Activated naive CD4-positive, alpha-beta T cell treated with anti-CD3 and anti-CD28 coated beads, Interleukin-2, amount 10 ng/mL, durations not matched to agents 7 days and 5 days (primary cell): ENCODE measurements at regions of chr11 and their contacts with region 1.

Region 1: GRCh38 chr11:3807909-3808860 is at the start of gene PGAP2:
- DNase-seq: peak; percentile 81
- H3K4me3 Mint-ChIP-seq: peak within 1 kb of the TSS; percentile 93
- H3K27ac Mint-ChIP-seq: peak within 1 kb of the TSS; percentile 91
- H3K4me1 Mint-ChIP-seq: peaks cover 26% of the 10 kb centered on the region
- H3K27me3 Mint-ChIP-seq: no peaks in the 10 kb centered on the region

Region 2: DNA sequence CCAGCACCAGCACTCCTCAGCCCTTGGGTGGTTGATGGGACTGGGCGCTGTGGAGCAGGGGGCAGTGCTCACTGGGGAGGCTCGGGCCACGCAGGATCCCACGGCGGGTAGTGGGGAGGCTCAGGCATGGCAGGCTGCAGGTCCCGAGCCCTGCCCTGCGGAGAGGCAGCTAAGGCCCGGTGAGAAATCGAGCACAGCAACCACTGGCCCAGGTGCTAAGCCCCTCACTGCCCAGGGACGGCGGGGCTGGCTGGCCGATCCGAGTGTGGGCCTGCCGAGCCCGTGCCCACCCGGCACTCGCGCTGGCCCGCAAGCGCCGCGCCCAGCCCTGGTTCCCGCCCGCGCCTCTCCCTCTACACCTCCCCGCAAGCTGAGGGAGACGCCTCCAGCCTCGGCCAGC is 373.2 kb before region 1 on chr11:
- CTCF ChIA-PET with region 1: no interaction called
- DNase-seq: no peak
- H3K4me3 Mint-ChIP-seq: no peak overlapping the region
- H3K27ac Mint-ChIP-seq: no peak overlapping the region
- H3K4me1 Mint-ChIP-seq: peaks cover 3% of the 10 kb centered on the region
- H3K27me3 Mint-ChIP-seq: peaks cover 20% of the 10 kb centered on the region

Region 3: GRCh38 chr11:3609416-3610265 is 198.5 kb before region 1 on chr11:
- CTCF ChIA-PET with region 1: interaction called, 14 read pairs
- DNase-seq: peak; percentile 28
- H3K4me3 Mint-ChIP-seq: no peak overlapping the region
- H3K27ac Mint-ChIP-seq: no peak overlapping the region
- H3K4me1 Mint-ChIP-seq: peaks cover 10% of the 10 kb centered on the region
- H3K27me3 Mint-ChIP-seq: peaks cover 12% of the 10 kb centered on the region

Region 4: DNA sequence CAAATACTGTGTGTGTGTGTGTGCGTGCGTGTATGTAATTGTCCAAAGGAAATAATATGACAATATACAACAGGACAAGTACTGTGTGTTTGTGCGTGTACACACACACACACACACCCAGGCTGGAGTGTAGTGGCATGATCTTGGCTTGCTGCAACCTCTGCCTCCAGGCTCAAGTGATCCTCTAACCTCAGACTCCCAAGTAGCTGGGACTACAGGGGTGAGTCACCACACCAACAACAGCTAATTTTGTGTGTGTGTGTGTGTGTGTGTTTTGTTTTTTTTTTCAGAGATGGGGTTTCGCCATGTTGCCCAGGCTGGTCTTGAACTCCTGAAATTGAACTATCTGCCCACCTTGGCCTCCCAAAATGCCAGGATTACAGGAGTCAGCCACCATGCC is 72.4 kb before region 1 on chr11:
- CTCF ChIA-PET with region 1: interaction called, 24 read pairs
- DNase-seq: no peak
- H3K4me3 Mint-ChIP-seq: no peak overlapping the region
- H3K27ac Mint-ChIP-seq: no peak overlapping the region
- H3K4me1 Mint-ChIP-seq: peaks cover 12% of the 10 kb centered on the region
- H3K27me3 Mint-ChIP-seq: no peaks in the 10 kb centered on the region

Region 5: DNA sequence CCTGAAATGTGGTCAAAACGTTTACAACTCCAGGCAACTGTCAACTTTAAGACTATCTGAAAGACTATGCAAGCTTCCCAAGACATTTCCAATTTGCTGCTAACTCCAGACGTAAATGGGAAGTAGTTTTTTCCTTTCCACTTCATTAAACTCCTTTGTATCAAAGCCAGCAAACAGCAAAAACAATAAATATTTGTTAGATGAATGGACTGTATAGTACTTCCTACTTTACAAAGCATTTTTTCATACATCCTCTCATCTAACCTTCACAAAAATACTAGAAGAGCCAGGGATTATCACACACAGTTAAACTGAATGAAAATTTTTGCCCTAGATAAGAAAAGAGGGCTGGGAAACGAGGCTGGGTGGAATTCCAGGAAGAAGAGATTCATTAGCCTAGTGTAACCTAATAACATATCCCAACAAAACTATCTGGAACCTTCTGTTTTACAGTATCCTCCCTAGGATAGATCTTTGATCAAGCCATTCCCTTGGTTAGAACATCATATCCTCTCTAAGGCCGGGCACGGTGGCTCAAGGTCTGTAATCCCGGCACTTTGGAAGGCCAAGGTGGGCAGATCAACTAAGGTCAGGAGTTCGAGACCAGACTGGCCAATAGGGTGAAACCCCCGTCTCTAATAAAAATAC is 21.3 kb before region 1 on chr11:
- CTCF ChIA-PET with region 1: interaction called, 34 read pairs
- DNase-seq: no peak
- H3K4me3 Mint-ChIP-seq: no peak overlapping the region
- H3K27ac Mint-ChIP-seq: peak overlapping the region; percentile 78
- H3K4me1 Mint-ChIP-seq: peaks cover 65% of the 10 kb centered on the region
- H3K27me3 Mint-ChIP-seq: no peaks in the 10 kb centered on the region

Region 6: GRCh38 chr11:3841426-3842350 is 33.5 kb after region 1 on chr11:
- CTCF ChIA-PET with region 1: interaction called, 16 read pairs
- DNase-seq: peak; percentile 95
- H3K4me3 Mint-ChIP-seq: peak overlapping the region; percentile 82
- H3K27ac Mint-ChIP-seq: peak overlapping the region; percentile 99
- H3K4me1 Mint-ChIP-seq: peaks cover 56% of the 10 kb centered on the region
- H3K27me3 Mint-ChIP-seq: no peaks in the 10 kb centered on the region

Region 7: DNA sequence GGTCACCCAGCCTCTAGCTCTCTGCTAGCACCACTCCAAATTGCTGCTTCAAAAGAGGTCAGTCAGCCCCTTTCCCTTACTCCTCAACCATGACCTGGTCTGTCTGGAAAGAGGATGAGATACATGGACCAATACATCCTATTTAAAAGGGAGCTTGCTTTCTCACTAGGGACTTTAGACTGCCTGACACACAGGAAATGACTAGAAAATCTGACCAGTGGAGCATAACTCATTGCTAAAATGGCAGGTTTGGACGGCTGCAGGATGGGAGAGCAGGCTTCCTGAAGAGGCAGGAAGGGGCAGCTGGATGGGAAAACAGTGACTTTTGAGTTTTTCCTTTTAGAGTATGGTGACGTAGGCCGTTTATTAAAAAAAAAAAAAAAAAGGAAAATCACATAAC is 72.5 kb after region 1 on chr11:
- CTCF ChIA-PET with region 1: no interaction called
- DNase-seq: no peak
- H3K4me3 Mint-ChIP-seq: no peak overlapping the region
- H3K27ac Mint-ChIP-seq: no peak overlapping the region
- H3K4me1 Mint-ChIP-seq: peaks cover 57% of the 10 kb centered on the region
- H3K27me3 Mint-ChIP-seq: no peaks in the 10 kb centered on the region